ENCODE measurements at regions of chr22 and their contacts with region 1.

Region 1: DNA sequence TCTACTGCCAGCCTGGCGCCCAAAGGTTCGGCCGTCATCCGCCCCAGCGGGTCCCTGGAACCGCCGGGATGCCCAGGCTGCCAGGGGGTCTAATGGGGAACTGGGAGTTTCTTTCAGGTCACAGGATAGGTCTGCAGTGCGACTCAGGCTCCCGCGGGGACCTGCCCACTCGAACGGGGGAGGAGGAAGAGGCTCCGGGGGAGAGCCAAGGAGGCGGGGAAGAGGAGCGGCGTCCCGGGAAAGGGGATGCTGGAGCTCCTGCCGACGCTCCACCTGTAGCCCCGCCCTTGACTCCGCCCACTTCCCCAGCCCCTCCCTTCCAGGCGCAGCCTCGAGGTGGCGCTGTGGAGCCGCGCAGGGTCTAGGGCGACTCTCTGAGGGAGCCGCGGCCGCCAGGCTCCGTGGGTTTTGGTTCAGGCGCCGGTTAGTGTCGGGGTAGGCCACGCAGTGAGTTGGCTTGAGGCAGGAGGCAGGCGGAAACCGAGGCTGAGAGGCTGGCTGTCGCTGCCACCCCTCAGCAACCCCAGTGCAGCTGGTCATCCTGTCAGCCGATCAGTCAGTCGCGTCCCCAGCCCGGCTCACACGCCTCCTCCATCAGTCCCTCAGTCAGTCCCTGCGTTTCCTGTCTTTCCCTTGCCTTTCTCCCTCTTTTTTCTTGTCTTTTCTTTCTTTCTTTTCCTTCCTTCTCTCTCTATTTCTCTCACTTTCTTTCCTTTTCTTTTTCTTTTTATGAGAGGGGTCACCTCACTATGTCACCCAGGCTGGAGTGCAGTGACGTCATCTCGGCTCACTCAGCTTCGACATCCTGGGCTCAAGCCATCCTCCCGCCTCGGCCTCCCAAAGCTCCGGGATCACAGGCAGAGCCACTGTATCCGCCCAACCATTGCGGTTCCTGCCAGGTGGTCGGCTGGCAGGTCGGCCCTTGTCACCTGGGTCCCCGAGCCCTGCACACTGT is 26.4 kb downstream of the YWHAH start:
- DNase-seq: peak; percentile 82 to 96 (median 92)
- ATAC-seq: peak; percentile 97
- H3K4me3 ChIP-seq: peak overlapping the region; percentile 45
- H3K27ac ChIP-seq: no peak overlapping the region
- H3K4me1 ChIP-seq: peaks cover 3 to 18% of the 10 kb centered on the region in 2 experiments; a peak in 4 of 5 replicates
- H3K27me3 ChIP-seq: no peaks in the 10 kb centered on the region
- CTCF ChIP-seq: peak; percentile 56 to 89 (median 75)
- EP300 ChIP-seq: no peak
- POLR2A ChIP-seq: no peak
- RAD21 ChIP-seq: peak; percentile 36 to 58

Region 2: GRCh38 chr22:31561238-31561887 is 409.4 kb before region 1 on chr22:
- CTCF ChIA-PET with region 1: interaction called, 8 read pairs
- POLR2A ChIA-PET with region 1: no interaction called
- in situ Hi-C with region 1: no loop called
- intact Hi-C with region 1: loop called (anchors 10 kb)
- DNase-seq: peak; percentile 72 to 82 (median 72)
- ATAC-seq: peak; percentile 100
- H3K4me3 ChIP-seq: no peak overlapping the region
- H3K27ac ChIP-seq: no peak overlapping the region
- H3K4me1 ChIP-seq: peaks cover 0 to 3% of the 10 kb centered on the region in 2 experiments; a peak in 2 of 5 replicates
- H3K27me3 ChIP-seq: no peaks in the 10 kb centered on the region
- CTCF ChIP-seq: peak; percentile 83 to 87 (median 87)
- EP300 ChIP-seq: peak; percentile 11; the same call in 1 of the 2 replicates
- POLR2A ChIP-seq: no peak
- RAD21 ChIP-seq: peak; percentile 74 to 90

Region 3: GRCh38 chr22:31943976-31944699 is 26.6 kb before region 1 on chr22 and contains the start of gene YWHAH:
- CTCF ChIA-PET with region 1: no interaction called
- POLR2A ChIA-PET with region 1: no interaction called
- in situ Hi-C with region 1: no loop called
- intact Hi-C with region 1: no loop called
- DNase-seq: peak; percentile 87 to 95 (median 91)
- ATAC-seq: peak; percentile 82
- H3K4me3 ChIP-seq: peak within 1 kb of the TSS; percentile 96
- H3K27ac ChIP-seq: peak within 1 kb of the TSS; percentile 98
- H3K4me1 ChIP-seq: peaks cover 19 to 24% of the 10 kb centered on the region in 2 experiments
- H3K27me3 ChIP-seq: no peaks in the 10 kb centered on the region
- CTCF ChIP-seq: no peak
- EP300 ChIP-seq: peak; percentile 26
- POLR2A ChIP-seq: peak; percentile 70
- RAD21 ChIP-seq: 0 out of 4 replicates have a peak, but pooled peaks of 1 of the 2 experiments have one; percentile 5
- polyA plus RNA-seq, gene YWHAH: 32.0 to 39.6 TPM

Region 4: DNA sequence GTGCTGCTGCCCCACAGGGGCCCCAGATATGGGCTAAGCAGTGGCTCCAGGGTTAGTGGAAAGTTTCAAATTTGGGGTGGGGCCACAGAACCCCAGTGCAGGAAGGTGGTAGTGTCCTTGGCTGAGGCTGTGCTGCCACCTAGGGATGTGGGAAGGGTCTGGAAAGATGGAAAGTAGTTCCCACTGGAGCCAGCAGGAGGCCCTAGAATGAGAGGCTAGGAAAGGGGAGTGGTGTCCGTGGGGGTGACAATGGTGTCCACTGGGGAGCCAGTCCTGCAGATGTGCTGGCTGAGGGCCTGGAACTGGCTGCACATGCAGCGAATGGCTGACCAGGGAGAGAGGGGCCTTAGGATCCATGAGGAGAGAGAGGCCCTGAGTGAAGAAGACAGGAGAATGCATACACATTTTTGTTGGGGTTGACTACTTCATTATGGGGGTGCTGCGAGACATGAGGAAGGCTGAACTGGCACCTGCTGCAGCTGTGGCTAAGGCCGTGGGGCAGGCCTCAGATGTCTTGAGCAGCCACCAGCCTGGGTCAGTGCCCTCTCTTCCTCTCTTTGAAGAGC is 408.0 kb after region 1 on chr22:
- CTCF ChIA-PET with region 1: no interaction called
- POLR2A ChIA-PET with region 1: no interaction called
- in situ Hi-C with region 1: no loop called
- intact Hi-C with region 1: loop called (anchors 10 kb)
- DNase-seq: peak; percentile 72 to 74 (median 72)
- ATAC-seq: peak; percentile 98
- H3K4me3 ChIP-seq: no peak overlapping the region
- H3K27ac ChIP-seq: no peak overlapping the region
- H3K4me1 ChIP-seq: peaks cover 0 to 8% of the 10 kb centered on the region in 2 experiments; a peak in 3 of 5 replicates
- H3K27me3 ChIP-seq: no peaks in the 10 kb centered on the region
- CTCF ChIP-seq: peak; percentile 91 to 99 (median 99)
- EP300 ChIP-seq: no peak
- POLR2A ChIP-seq: no peak
- RAD21 ChIP-seq: peak; percentile 43 to 77; a peak in 3 of 4 replicates

Measured in K562 (cell line).